T-cell (primary cell): ENCODE measurements at regions of chr11 and their contacts with region 1.

Region 1: GRCh38 chr11:20754933-20755332 is 85.5 kb downstream of the NELL1 start:
- DNase-seq: no peak
- ATAC-seq: no peak
- H3K4me3 ChIP-seq: no peak overlapping the region
- H3K4me3 Mint-ChIP-seq: no peak overlapping the region
- H3K27ac ChIP-seq: no peak overlapping the region
- H3K27ac Mint-ChIP-seq: no peak overlapping the region
- H3K4me1 ChIP-seq: no peaks in the 10 kb centered on the region
- H3K4me1 Mint-ChIP-seq: no peaks in the 10 kb centered on the region
- H3K27me3 ChIP-seq: no peaks in the 10 kb centered on the region
- H3K27me3 Mint-ChIP-seq: no peaks in the 10 kb centered on the region

Region 2: DNA sequence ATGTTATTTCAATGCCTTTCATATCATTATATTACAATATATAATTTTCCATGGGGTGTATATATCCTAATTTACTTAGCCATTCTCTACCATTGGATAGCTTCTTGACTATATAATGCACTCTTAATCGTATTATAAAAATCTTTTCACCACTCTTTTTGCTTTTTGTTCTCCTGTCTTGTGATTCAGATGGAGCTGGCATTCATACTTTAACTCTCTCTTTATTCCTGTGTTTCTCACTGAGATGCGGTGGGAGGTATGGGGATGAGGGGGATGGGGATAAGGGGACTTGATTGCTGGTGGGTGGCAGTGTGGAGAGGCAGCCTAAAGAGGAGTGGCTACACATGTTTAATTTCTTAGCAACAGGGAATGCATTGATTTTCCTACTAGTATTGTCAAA is 20.4 kb after region 1 on chr11:
- CTCF ChIA-PET with region 1: interaction called in 1 of 2 experiments, 10 read pairs
- POLR2A ChIA-PET with region 1: no interaction called
- DNase-seq: no peak
- ATAC-seq: no peak
- H3K4me3 ChIP-seq: no peak overlapping the region
- H3K4me3 Mint-ChIP-seq: no peak overlapping the region
- H3K27ac ChIP-seq: no peak overlapping the region
- H3K27ac Mint-ChIP-seq: no peak overlapping the region
- H3K4me1 ChIP-seq: no peaks in the 10 kb centered on the region
- H3K4me1 Mint-ChIP-seq: no peaks in the 10 kb centered on the region
- H3K27me3 ChIP-seq: no peaks in the 10 kb centered on the region
- H3K27me3 Mint-ChIP-seq: no peaks in the 10 kb centered on the region

Region 3: DNA sequence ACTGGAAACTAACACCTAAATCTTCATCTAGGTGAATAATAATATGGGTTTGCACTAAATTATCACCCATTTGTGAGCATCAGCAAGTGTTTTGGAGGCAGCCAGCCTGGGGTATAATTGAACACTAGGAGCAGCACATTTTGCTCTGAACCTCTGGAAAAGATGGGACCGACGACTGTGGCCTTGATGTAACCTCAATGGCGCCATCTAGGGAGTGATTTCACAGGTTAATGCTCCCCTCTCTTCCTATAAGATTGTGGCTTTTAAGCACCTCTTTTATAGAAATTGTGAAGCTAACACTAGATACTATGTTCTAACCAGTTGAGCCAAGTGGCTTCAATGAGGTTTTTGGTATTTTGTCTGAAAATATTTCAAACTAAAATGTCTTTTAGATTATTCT is 118.1 kb after region 1 on chr11:
- CTCF ChIA-PET with region 1: no interaction called
- POLR2A ChIA-PET with region 1: no interaction called
- DNase-seq: no peak
- ATAC-seq: no peak
- H3K4me3 ChIP-seq: no peak overlapping the region
- H3K4me3 Mint-ChIP-seq: no peak overlapping the region
- H3K27ac ChIP-seq: no peak overlapping the region
- H3K27ac Mint-ChIP-seq: no peak overlapping the region
- H3K4me1 ChIP-seq: no peaks in the 10 kb centered on the region
- H3K4me1 Mint-ChIP-seq: no peaks in the 10 kb centered on the region
- H3K27me3 ChIP-seq: no peaks in the 10 kb centered on the region
- H3K27me3 Mint-ChIP-seq: peaks cover 0 to 3% of the 10 kb centered on the region in 2 donors